MCF 10A (cell line): ENCODE measurements at regions of chr16 and their contacts with region 1.

Region 1: GRCh38 chr16:25823891-25824290 is 132.1 kb downstream of the HS3ST4 start:
- DNase-seq: no peak
- H3K4me3 Mint-ChIP-seq: no peak overlapping the region
- H3K27ac Mint-ChIP-seq: no peak overlapping the region
- H3K4me1 Mint-ChIP-seq: no peaks in the 10 kb centered on the region
- H3K27me3 Mint-ChIP-seq: no peaks in the 10 kb centered on the region
- CTCF ChIP-seq: no peak

Region 2: GRCh38 chr16:25812215-25812614 is 11.7 kb before region 1 on chr16:
- CTCF ChIA-PET with region 1: no interaction called
- POLR2A ChIA-PET with region 1: no interaction called
- intact Hi-C with region 1: no loop called
- DNase-seq: no peak
- H3K4me3 Mint-ChIP-seq: no peak overlapping the region
- H3K27ac Mint-ChIP-seq: no peak overlapping the region
- H3K4me1 Mint-ChIP-seq: no peaks in the 10 kb centered on the region
- H3K27me3 Mint-ChIP-seq: no peaks in the 10 kb centered on the region
- CTCF ChIP-seq: no peak

Region 3: DNA sequence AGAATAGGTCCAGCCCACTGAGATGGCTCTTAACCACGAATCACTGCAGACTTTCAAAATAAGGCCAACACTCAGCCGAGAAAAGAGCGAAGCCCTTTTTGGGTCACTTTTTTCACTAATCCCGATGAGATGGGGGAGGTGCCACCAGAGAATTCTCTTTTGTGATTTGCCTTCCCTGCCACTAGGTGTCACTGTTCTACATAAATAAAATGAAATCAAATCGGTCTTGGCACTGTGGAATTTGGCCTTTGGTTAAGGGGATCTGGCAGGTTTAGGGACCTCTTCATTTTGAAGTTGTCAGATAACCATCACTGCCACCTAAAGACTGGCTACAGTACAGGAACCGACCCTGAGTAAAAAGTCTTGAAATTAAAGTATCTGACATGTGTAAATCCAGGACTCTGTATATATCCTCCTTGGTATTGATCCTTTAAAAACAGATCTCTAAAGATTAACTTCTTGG is 14.9 kb after region 1 on chr16:
- CTCF ChIA-PET with region 1: interaction called, 11 read pairs
- POLR2A ChIA-PET with region 1: no interaction called
- intact Hi-C with region 1: no loop called
- DNase-seq: peak; percentile 33
- H3K4me3 Mint-ChIP-seq: no peak overlapping the region
- H3K27ac Mint-ChIP-seq: no peak overlapping the region
- H3K4me1 Mint-ChIP-seq: no peaks in the 10 kb centered on the region
- H3K27me3 Mint-ChIP-seq: no peaks in the 10 kb centered on the region
- CTCF ChIP-seq: peak; percentile 76

Region 4: DNA sequence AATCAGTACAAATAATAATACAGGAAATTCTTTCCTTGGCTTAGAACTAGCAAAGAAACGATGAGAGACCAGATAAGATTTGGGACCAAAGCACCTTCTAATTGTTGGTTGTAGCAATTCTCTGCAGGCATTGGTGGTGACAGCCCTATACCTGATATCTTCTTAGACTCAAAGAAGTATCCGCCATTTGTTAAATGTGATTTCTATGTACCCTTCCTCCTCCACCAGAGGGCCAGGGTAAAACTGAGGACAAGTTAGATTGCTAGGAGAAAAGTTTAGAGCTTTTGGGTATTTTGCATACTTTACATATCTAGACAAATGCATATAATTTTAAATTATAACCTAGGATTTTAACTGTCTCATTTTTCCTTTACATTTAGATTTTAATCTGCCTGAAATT is 172.2 kb after region 1 on chr16:
- CTCF ChIA-PET with region 1: no interaction called
- POLR2A ChIA-PET with region 1: no interaction called
- intact Hi-C with region 1: no loop called
- DNase-seq: no peak
- H3K4me3 Mint-ChIP-seq: no peak overlapping the region
- H3K27ac Mint-ChIP-seq: no peak overlapping the region
- H3K4me1 Mint-ChIP-seq: no peaks in the 10 kb centered on the region
- H3K27me3 Mint-ChIP-seq: no peaks in the 10 kb centered on the region
- CTCF ChIP-seq: no peak